ENCODE measurements at regions of chr11 and their contacts with region 1.

Region 1: GRCh38 chr11:62298975-62299374 is at the start of gene SCGB1D4:
- DNase-seq: no peak
- H3K4me3 ChIP-seq: no peak within 1 kb of the TSS
- H3K27ac ChIP-seq: no peak within 1 kb of the TSS
- H3K4me1 ChIP-seq: no peaks in the 10 kb centered on the region
- H3K27me3 ChIP-seq: peaks cover 0 to 27% (median 8%) of the 10 kb centered on the region in 5 experiments

Region 2: GRCh38 chr11:62309991-62310390 is 11.0 kb after region 1 on chr11:
- CTCF ChIA-PET with region 1: interaction called, 11 read pairs
- POLR2A ChIA-PET with region 1: interaction called, 4 read pairs
- DNase-seq: peak; percentile 31 to 89 (median 84)
- H3K4me3 ChIP-seq: no peak overlapping the region
- H3K27ac ChIP-seq: no peak overlapping the region
- H3K4me1 ChIP-seq: peaks cover 0 to 9% (median 5%) of the 10 kb centered on the region in 4 experiments
- H3K27me3 ChIP-seq: peaks cover 0 to 7% (median 4%) of the 10 kb centered on the region in 5 experiments

Region 3: GRCh38 chr11:62400760-62401159 is 101.8 kb after region 1 on chr11:
- CTCF ChIA-PET with region 1: no interaction called
- POLR2A ChIA-PET with region 1: no interaction called
- DNase-seq: no peak
- H3K4me3 ChIP-seq: no peak overlapping the region
- H3K27ac ChIP-seq: no peak overlapping the region
- H3K4me1 ChIP-seq: peaks cover 0 to 65% (median 35%) of the 10 kb centered on the region in 4 experiments
- H3K27me3 ChIP-seq: no peaks in the 10 kb centered on the region